ENCODE measurements at regions of chr4 and their contacts with region 1.

Region 1: DNA sequence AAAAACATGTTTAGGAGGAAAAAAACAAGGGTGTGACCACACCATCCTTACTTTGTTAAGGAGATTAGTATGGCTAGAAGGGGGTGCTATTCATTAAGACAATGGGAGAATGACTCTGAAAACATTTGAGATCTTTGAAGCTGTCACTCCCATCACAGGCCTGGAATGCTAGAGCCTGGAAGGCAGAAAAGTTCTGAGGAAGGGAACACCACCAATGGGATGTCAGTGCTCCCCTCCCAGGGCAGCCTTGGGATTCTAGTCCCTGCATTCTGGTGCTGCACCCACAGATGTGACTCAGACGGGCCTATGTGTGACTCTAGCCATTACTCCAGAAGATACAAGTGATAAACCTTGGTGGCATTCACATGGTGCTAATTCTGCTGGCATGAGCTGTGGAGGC is 162.2 kb upstream of the ANXA10 start:
- DNase-seq: no peak
- ATAC-seq: no peak
- H3K4me3 ChIP-seq: no peak overlapping the region
- H3K4me3 Mint-ChIP-seq: no peak overlapping the region
- H3K27ac ChIP-seq: no peak overlapping the region
- H3K27ac Mint-ChIP-seq: no peak overlapping the region
- H3K4me1 ChIP-seq: no peaks in the 10 kb centered on the region
- H3K4me1 Mint-ChIP-seq: no peaks in the 10 kb centered on the region
- H3K27me3 ChIP-seq: no peaks in the 10 kb centered on the region
- H3K27me3 Mint-ChIP-seq: no peaks in the 10 kb centered on the region

Region 2: DNA sequence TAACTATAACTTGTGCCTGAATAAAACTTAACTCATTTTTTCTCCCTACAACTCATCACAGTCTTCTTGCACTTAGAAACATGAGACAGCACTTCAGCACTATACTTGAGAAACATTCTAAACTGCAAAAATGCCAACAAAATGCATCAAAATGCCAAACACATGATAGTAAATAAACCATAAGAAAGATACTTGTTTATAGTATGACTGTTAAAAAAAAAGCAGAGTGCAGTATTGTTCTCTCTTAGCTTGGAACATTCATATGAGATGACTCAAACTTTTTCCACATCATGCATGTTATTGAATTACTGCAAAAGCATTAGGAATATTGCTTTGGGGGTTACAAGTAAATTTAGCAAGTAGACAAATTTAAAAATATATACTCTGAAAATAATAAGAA is 26.5 kb after region 1 on chr4:
- CTCF ChIA-PET with region 1: no interaction called
- POLR2A ChIA-PET with region 1: no interaction called
- intact Hi-C with region 1: loop called in 1 of 2 experiments (anchors 1 kb)
- DNase-seq: no peak
- ATAC-seq: no peak
- H3K4me3 ChIP-seq: no peak overlapping the region
- H3K4me3 Mint-ChIP-seq: no peak overlapping the region
- H3K27ac ChIP-seq: no peak overlapping the region
- H3K27ac Mint-ChIP-seq: no peak overlapping the region
- H3K4me1 ChIP-seq: no peaks in the 10 kb centered on the region
- H3K4me1 Mint-ChIP-seq: no peaks in the 10 kb centered on the region
- H3K27me3 ChIP-seq: no peaks in the 10 kb centered on the region
- H3K27me3 Mint-ChIP-seq: no peaks in the 10 kb centered on the region

Measured in naive thymus-derived CD4-positive, alpha-beta T cell (primary cell).